WTC11 (cell line): ENCODE measurements at regions of chr10 and their contacts with region 1.

Region 1: DNA sequence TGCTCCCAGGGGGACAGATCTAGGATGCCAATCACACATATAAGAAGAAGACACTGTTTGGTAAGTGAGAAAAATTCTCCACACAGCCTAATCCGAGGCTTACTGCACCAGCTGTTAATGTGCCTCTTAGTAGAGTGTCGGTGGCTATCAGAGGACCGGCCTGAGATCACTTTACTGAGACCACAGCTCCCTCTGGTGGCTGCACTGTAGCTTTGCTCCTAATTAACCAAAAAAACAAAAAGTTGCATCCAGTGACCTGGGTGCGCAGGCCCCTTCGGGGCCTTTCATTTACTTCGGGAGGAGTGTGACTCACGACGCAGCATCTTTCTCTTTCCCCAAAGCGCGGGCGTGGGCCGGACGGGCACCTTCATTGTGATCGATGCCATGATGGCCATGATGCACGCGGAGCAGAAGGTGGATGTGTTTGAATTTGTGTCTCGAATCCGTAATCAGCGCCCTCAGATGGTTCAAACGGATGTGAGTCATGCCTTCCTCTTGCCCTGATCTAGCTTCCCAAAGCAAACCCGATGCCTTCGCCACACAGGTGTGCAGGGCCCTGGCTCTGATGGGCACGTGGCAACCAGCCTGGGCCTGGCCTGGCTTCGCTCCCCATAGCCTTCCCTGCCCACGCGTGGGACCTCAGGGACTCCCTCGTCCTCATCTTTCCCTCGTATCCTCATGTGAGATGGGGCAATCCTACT is 56.7 kb downstream of the MKI67 start:
- DNase-seq: peak; percentile 78
- ATAC-seq: peak; percentile 89
- H3K4me3 Mint-ChIP-seq: no peak overlapping the region
- H3K27ac Mint-ChIP-seq: no peak overlapping the region
- H3K4me1 Mint-ChIP-seq: peaks cover 8% of the 10 kb centered on the region
- H3K27me3 Mint-ChIP-seq: no peaks in the 10 kb centered on the region
- CTCF ChIP-seq: peak; percentile 87

Region 2: GRCh38 chr10:127715782-127716378 is 353.6 kb before region 1 on chr10:
- CTCF ChIA-PET with region 1: interaction called, 11 read pairs
- POLR2A ChIA-PET with region 1: no interaction called
- DNase-seq: no peak
- ATAC-seq: no peak; the same call in 1 of the 2 replicates
- H3K4me3 Mint-ChIP-seq: no peak overlapping the region
- H3K27ac Mint-ChIP-seq: no peak overlapping the region
- H3K4me1 Mint-ChIP-seq: 0 out of 2 replicates have a peak, but pooled peaks cover 2% of the 10 kb centered on the region
- H3K27me3 Mint-ChIP-seq: no peaks in the 10 kb centered on the region; the same call in 1 of the 2 replicates
- CTCF ChIP-seq: no peak

Region 3: DNA sequence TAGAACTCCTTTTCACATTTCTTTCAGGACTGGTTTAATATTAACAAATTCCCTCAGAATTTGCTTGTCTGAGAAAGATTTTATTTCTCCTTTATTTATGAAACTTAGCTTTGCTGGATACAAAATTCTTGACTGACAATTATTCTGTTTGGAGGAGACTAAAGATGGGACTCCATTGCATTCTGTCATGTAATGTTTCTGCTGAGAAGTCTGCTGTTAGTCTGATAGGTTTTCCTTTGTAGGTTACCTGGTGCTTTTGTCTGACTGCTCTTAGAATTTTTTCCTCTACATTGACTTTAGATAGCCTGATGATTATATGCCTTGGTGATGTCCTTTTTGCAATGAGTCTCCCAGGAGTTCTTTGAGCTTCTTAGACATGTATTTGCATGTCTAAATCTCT is 200.2 kb before region 1 on chr10:
- CTCF ChIA-PET with region 1: interaction called, 18 read pairs
- POLR2A ChIA-PET with region 1: interaction called, 4 read pairs
- DNase-seq: no peak
- ATAC-seq: no peak
- H3K4me3 Mint-ChIP-seq: no peak overlapping the region
- H3K27ac Mint-ChIP-seq: no peak overlapping the region
- H3K4me1 Mint-ChIP-seq: no peaks in the 10 kb centered on the region
- H3K27me3 Mint-ChIP-seq: no peaks in the 10 kb centered on the region; the same call in 1 of the 2 replicates
- CTCF ChIP-seq: no peak

Region 4: GRCh38 chr10:128011175-128011979 is 58.1 kb before region 1 on chr10:
- CTCF ChIA-PET with region 1: interaction called, 38 read pairs
- POLR2A ChIA-PET with region 1: no interaction called
- DNase-seq: peak; percentile 88
- ATAC-seq: peak; percentile 93
- H3K4me3 Mint-ChIP-seq: peak overlapping the region; percentile 28; the same call in 1 of the 2 replicates
- H3K27ac Mint-ChIP-seq: no peak overlapping the region
- H3K4me1 Mint-ChIP-seq: peaks cover 2% of the 10 kb centered on the region; the same call in 1 of the 2 replicates
- H3K27me3 Mint-ChIP-seq: peaks cover 6% of the 10 kb centered on the region
- CTCF ChIP-seq: peak; percentile 97

Region 5: GRCh38 chr10:128047351-128047750 is 22.1 kb before region 1 on chr10:
- CTCF ChIA-PET with region 1: interaction called, 35 read pairs
- POLR2A ChIA-PET with region 1: no interaction called
- DNase-seq: peak; percentile 65
- ATAC-seq: peak; percentile 99
- H3K4me3 Mint-ChIP-seq: no peak overlapping the region
- H3K27ac Mint-ChIP-seq: peak overlapping the region; percentile 45
- H3K4me1 Mint-ChIP-seq: peaks cover 9% of the 10 kb centered on the region
- H3K27me3 Mint-ChIP-seq: peaks cover 6% of the 10 kb centered on the region; the same call in 1 of the 2 replicates
- CTCF ChIP-seq: no peak